Activated CD4-positive, alpha-beta memory T cell treated with anti-CD3 and anti-CD28 coated beads for 36 hours (primary cell): ENCODE measurements at regions of chrX and their contacts with region 1.

Region 1: DNA sequence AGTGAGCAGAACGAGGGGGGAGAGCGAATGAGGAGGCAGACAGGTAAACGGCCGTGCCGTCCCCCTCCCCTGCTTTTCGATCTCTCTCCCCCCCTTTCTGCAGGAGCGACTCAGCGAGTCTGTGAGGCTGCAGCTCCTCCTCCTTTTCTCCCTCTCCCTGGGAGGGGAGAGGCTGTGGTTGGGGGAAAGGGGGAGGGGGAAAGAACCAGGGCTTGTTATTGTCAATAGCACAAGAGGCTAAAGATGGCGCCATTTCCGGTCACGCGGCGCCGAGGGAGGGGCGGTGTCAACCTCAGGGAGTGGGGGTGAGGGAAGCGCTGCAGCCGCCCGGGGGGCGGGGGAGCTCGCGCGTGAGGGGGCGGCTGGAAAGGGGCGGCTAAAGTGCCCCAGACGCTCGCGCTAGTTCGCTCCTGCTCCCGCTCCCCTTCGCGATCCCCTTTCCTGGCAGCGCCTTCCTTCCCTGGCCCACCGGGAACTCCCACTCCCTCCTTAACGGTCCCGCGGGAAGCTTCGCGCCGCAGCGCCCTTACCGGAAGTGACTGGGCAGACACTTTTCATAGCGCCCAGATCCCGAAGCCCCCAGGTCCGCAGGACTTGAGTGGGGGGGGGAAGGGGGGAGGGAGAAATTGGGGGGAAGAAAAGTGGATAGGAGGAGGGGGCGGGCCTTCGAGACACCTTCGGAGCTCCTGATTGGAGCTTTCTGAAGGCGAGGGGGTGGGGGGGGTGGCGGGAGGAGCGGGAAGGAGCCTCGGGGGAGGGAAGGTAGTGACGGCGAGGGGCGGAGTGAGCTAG is at the start of gene CUL4B:
- DNase-seq: peak; percentile 95
- H3K4me3 Mint-ChIP-seq: peak within 1 kb of the TSS; percentile 95
- H3K27ac Mint-ChIP-seq: peak within 1 kb of the TSS; percentile 95
- H3K4me1 Mint-ChIP-seq: peaks cover 24% of the 10 kb centered on the region
- H3K27me3 Mint-ChIP-seq: no peaks in the 10 kb centered on the region
- total RNA-seq, gene CUL4B: 39.4 to 40.2 TPM

Region 2: GRCh38 chrX:120485638-120486520 is 75.2 kb before region 1 on chrX:
- CTCF ChIA-PET with region 1: interaction called, 8 read pairs
- POLR2A ChIA-PET with region 1: no interaction called
- intact Hi-C with region 1: loop called (anchors 5 kb)
- DNase-seq: peak; percentile 69
- H3K4me3 Mint-ChIP-seq: peak overlapping the region; percentile 69
- H3K27ac Mint-ChIP-seq: peak overlapping the region; percentile 86
- H3K4me1 Mint-ChIP-seq: peaks cover 26% of the 10 kb centered on the region
- H3K27me3 Mint-ChIP-seq: no peaks in the 10 kb centered on the region

Region 3: GRCh38 chrX:120549483-120550452 is 11.3 kb before region 1 on chrX:
- CTCF ChIA-PET with region 1: no interaction called
- POLR2A ChIA-PET with region 1: interaction called, 7 read pairs
- intact Hi-C with region 1: loop called (anchors 1 kb)
- DNase-seq: peak; percentile 52
- H3K4me3 Mint-ChIP-seq: no peak overlapping the region
- H3K27ac Mint-ChIP-seq: peak overlapping the region; percentile 52
- H3K4me1 Mint-ChIP-seq: peaks cover 19% of the 10 kb centered on the region
- H3K27me3 Mint-ChIP-seq: no peaks in the 10 kb centered on the region

Region 4: DNA sequence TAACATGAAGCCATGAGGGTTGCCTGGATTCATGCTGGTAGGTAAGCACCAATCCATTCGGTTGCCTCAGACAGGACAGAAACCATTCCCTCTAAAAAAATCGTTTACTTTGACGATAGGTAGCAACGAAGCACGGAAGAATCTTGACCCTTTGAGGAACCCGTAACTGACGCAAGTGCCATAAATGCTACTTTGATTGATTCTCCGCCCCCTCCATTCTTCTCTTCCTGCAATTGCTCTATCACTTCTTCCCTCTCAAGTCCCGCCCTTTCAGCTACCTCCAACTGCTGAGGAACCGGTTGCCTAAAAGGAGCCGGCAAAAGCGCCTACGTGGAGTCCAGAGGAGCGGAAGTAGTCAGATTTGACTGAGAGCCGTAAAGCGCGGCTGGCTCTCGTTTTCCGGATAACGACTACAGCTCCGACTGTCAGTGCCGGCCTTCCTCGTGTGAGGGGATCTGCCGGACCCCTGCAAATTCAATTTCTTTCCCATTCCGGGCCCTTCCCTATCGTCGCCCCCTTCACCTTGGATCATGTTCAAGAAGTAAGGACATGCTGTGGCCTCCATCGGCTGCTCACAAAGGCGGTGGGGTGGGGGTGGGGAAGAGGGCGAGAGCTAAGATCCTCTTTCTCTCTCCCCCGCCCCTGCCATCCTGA is 42.8 kb after region 1 on chrX and contains the start of gene MCTS1:
- CTCF ChIA-PET with region 1: no interaction called
- POLR2A ChIA-PET with region 1: interaction called, 25 read pairs
- intact Hi-C with region 1: loop called (anchors 1 kb)
- DNase-seq: peak; percentile 87
- H3K4me3 Mint-ChIP-seq: peak within 1 kb of the TSS; percentile 95
- H3K27ac Mint-ChIP-seq: peak within 1 kb of the TSS; percentile 97
- H3K4me1 Mint-ChIP-seq: peaks cover 8% of the 10 kb centered on the region
- H3K27me3 Mint-ChIP-seq: no peaks in the 10 kb centered on the region
- total RNA-seq, gene MCTS1: 67.5 to 70.9 TPM

Region 5: DNA sequence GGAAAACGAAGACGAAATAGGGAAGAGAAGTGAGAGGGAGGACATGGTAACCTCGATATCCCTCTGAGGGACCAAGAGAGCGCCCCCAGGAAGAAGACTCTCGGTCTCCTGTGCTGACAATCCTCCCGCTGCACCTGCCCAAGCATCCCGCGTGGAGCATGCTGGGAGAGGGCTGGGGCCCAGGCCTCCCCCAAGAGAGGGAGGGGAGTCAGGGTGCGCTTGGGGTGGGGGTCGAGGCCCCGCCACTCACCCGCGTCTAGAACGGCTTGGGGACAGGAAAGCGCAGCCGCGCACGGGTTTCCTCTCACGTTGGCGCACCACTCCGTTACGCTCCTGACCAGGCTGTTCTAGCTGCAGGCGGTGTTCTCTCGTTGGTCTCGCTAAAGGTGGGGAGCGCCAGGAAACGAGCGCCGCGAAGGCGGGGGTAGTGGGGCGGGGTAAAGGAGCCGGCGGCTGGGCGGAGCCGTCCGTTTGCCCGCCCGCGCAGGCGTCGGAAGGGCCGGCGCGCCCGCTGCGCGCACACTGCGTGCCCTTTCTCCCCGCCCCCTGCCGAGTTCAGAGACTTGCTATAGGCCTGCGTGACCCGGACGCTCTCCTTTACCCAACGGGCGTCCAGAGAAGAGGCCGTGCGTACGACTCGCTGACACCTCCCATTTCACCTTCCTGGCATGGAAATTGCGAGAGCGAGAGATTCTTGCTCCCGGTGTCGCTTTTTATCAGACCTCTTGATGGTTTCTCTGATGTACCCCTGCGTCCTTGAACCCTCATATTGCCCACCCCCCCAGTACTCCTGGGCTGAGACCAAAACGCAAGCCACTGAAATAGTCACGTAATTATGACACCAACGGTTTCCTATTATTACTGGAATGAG is 68.9 kb after region 1 on chrX and contains the start of gene C1GALT1C1:
- CTCF ChIA-PET with region 1: interaction called, 4 read pairs
- POLR2A ChIA-PET with region 1: no interaction called
- intact Hi-C with region 1: loop called (anchors 1 kb)
- DNase-seq: peak; percentile 94
- H3K4me3 Mint-ChIP-seq: peak within 1 kb of the TSS; percentile 90
- H3K27ac Mint-ChIP-seq: peak within 1 kb of the TSS; percentile 95
- H3K4me1 Mint-ChIP-seq: peaks cover 23% of the 10 kb centered on the region
- H3K27me3 Mint-ChIP-seq: no peaks in the 10 kb centered on the region
- total RNA-seq, gene C1GALT1C1: 17.7 to 19.7 TPM